ENCODE measurements at regions of chr1 and their contacts with region 1.

Region 1: DNA sequence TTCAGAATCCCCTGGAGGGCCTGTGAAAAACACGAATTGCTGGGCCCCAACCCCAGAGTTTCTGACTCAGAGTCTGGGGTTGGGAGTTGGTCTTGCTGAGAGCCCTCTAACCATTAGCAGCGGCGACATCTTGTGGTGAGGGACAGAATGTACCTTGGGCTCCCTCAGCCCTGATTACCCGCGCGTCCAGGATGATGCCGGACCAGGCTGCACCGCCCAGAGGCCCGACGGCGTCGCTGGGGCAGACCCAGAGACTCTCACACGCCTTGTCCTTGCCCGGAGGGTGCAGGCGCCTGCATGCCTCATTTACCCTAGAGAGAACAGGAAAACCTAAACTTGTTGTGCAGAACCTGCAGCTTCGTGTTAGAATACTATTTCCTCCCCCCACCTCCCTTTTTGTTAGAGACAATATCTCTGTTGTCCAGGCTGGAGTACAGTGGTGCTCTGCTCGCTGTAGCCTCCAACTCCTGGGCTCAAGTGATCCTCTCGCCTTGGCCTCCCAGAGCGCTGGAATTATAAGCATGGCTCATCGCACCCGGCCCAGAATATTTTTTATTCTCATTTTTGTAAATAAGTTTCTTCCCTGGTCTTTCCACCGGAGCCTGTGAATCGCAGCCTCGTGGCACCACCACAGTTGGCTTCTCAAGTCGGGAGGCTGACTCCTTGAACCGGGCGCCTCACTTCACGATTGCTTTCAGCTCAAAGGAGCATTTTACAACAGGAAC is 22.2 kb upstream of the RD3 start:
- DNase-seq: peak; percentile 92
- CTCF ChIP-seq: peak; percentile 82

Region 2: GRCh38 chr1:211566431-211567025 is 52.3 kb after region 1 on chr1:
- in situ Hi-C with region 1: no loop called
- DNase-seq: peak; percentile 59
- CTCF ChIP-seq: no peak

Region 3: DNA sequence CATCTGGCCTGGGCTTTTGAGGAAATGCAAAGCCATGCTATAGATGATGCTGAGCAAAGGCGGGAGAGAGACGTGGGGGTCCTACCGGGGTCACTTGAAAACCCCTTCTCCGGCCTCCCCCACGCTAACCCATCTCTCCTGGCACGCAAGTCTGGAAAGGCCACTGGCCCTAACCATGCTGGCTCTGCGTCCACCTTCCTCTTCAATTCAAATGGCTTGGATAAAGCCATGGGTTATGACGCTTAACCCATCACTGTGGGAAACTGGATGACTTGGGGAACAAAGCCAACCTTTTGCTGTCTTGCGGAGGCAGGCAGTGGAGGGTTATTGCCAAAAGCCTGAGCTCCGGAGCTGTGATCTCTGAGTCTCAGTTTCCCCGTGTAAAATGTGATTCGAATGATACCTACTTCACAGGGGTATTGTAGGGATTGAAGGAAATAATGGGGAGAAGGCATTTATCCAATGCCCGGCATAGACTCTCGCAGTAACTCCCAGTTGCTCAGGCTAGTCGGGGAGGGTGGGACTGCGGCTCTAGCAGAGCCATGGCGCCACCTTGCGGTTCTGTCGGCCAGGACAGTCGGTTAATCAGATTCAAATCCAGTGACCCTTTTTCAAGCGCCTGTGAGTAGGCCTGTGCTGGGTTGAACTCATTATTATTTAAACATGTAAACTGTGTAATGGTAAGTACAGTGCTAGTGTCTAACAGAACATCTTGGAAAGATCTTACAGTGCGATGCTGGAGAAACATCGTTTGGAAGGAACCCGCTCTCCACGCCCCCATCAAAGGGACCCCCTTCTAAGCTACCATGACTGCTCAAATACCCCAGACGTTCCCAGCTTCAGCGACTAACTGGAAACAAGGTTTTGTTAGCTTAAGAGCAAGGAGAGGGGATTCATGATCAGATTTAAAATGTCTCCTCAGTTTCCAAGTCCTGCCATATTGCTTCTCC is 140.9 kb after region 1 on chr1:
- in situ Hi-C with region 1: loop called (anchors 10 kb)
- DNase-seq: peak; percentile 81
- CTCF ChIP-seq: peak; percentile 89

Measured in GM13976 (cell line).